ENCODE measurements at regions of chr15 and their contacts with region 1.

Region 1: DNA sequence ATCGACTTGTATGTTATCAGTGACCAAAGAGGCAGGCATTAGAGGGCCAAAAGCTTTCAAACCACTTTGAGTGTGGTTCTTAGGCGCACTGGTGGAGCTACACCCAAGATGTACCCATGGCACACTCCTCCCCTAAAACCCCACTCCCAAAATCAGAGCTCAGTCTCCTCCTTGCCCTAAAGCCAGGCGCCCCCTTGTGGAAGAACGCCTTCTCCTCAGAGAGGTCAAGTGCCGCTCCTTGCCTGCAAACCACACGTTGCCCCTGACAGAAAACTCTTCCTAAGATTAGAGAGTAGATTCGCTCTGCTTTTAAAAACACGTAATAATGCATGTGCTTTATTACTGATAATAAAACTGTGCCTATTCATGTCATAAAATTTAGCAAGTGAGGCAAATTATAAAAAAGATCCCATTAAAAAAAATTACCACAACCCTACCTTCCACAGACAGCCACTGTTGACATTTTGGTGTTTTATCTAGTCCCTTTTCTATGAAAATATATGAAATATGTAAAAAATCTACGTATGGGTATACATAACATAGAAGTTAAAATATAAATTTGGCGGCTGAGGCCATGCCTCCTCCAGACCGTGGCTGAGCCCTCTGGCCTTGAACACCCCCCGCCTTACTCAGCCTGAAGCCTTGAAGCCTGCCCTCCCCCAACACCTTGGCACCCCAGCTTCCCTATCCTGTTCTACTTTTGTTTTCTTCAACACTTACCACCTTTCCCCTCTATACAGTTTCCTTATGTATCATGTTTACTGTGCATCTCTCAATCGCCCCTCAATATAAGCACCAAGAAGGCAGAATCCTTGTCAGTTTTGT is 33.5 kb downstream of the BCL2L10 start:
- DNase-seq: peak; percentile 72 to 80 (median 73)
- H3K4me3 ChIP-seq: no peak overlapping the region
- H3K4me3 Mint-ChIP-seq: peak overlapping the region in 1 of 8 donors; percentile 0
- H3K27ac ChIP-seq: no peak overlapping the region
- H3K27ac Mint-ChIP-seq: peak overlapping the region in 1 of 7 donors; percentile 31
- H3K4me1 ChIP-seq: no peaks in the 10 kb centered on the region
- H3K4me1 Mint-ChIP-seq: peaks cover 2 to 15% (median 6%) of the 10 kb centered on the region in 4 donors
- H3K27me3 ChIP-seq: no peaks in the 10 kb centered on the region
- H3K27me3 Mint-ChIP-seq: no peaks in the 10 kb centered on the region

Region 2: DNA sequence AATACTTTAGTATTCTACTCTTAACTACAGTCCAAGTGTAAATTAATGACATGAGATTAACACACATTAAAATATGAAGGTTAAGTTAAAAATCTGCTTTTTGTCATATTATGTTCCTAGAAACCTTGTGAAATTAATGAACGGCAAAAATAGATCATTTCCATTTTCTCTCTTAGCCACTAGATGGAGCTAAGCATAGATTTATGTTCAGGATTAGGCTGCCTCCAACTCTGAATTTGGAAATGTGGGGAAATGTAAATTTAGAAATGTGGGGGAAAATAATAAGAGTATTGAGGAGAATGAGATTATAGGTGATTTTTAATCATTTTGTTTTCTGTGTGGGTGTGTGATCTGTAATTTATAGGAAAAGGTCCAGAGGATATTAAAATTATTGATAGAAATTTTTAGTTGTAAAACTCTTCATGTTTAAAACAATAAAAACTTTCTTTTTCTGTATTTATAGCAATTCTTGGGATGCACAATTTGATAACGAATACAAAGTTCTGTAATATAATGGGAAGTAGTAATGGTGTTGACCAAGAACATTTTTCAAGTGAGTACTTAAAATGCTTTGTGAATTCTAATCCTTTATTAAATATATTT is 190.4 kb before region 1 on chr15:
- CTCF ChIA-PET with region 1: interaction called, 4 read pairs
- POLR2A ChIA-PET with region 1: no interaction called
- intact Hi-C with region 1: loop called (anchors 1 kb)
- DNase-seq: peak in 3 of 5 donors; percentile 8 to 20 (median 19)
- H3K4me3 ChIP-seq: no peak overlapping the region
- H3K4me3 Mint-ChIP-seq: no peak overlapping the region
- H3K27ac ChIP-seq: no peak overlapping the region
- H3K27ac Mint-ChIP-seq: peak overlapping the region in 2 of 7 donors; percentile 0 to 13
- H3K4me1 ChIP-seq: no peaks in the 10 kb centered on the region
- H3K4me1 Mint-ChIP-seq: peaks cover 6 to 16% (median 7%) of the 10 kb centered on the region in 4 donors
- H3K27me3 ChIP-seq: no peaks in the 10 kb centered on the region
- H3K27me3 Mint-ChIP-seq: no peaks in the 10 kb centered on the region

Region 3: GRCh38 chr15:51982013-51982769 is 96.9 kb before region 1 on chr15:
- CTCF ChIA-PET with region 1: interaction called, 101 read pairs
- POLR2A ChIA-PET with region 1: no interaction called
- intact Hi-C with region 1: loop called (anchors 1 kb)
- DNase-seq: peak; percentile 61 to 72 (median 66)
- H3K4me3 ChIP-seq: no peak overlapping the region
- H3K4me3 Mint-ChIP-seq: peak overlapping the region; percentile 69 to 87 (median 80)
- H3K27ac ChIP-seq: no peak overlapping the region
- H3K27ac Mint-ChIP-seq: peak overlapping the region; percentile 15 to 94 (median 83)
- H3K4me1 ChIP-seq: peaks cover 13% of the 10 kb centered on the region
- H3K4me1 Mint-ChIP-seq: peaks cover 9 to 10% (median 10%) of the 10 kb centered on the region in 4 donors
- H3K27me3 ChIP-seq: no peaks in the 10 kb centered on the region
- H3K27me3 Mint-ChIP-seq: no peaks in the 10 kb centered on the region

Region 4: DNA sequence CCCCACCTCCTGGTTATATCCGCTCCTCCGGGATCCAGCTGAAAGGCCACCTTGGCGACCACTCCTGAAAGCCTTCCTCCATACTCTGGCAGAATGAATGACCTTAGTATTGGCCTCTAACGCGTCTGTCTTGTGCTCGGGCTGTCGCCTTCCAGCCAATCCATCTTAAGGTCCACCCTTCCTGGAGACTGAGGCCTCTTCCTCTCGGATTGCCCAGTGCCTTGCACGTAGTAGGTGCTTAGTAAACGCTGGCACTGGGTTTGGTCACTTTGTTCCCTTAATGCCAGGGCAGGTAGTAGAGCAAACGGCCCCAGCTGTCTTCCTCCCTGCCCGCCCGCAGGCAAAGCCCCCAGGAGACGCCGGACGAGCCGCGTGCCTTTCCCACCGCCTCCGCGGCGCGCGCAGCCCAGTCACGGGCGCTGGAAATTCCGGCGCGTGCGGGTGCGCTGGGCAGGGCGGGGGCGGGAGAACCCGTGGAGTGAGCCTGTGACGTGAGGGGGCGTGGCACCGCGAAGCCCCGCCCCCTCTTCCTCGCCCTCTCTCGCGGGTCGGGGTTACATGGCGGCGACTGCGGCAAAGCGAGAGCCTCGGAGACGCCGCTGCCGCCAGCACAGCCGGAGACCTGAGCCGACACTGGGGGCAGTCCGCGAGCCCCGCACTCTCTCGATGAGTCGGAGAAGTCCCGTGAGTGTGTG is 60.2 kb before region 1 on chr15 and contains the start of gene MAPK6:
- CTCF ChIA-PET with region 1: interaction called, 9 read pairs
- POLR2A ChIA-PET with region 1: interaction called, 11 read pairs
- intact Hi-C with region 1: loop called (anchors 2 kb)
- DNase-seq: peak; percentile 91 to 94 (median 94)
- H3K4me3 ChIP-seq: peak within 1 kb of the TSS; percentile 59 to 78
- H3K4me3 Mint-ChIP-seq: peak within 1 kb of the TSS; percentile 94 to 99 (median 97)
- H3K27ac ChIP-seq: peak within 1 kb of the TSS; percentile 89
- H3K27ac Mint-ChIP-seq: peak within 1 kb of the TSS; percentile 98 to 99 (median 98)
- H3K4me1 ChIP-seq: peaks cover 41% of the 10 kb centered on the region
- H3K4me1 Mint-ChIP-seq: peaks cover 25 to 54% (median 38%) of the 10 kb centered on the region in 4 donors
- H3K27me3 ChIP-seq: no peaks in the 10 kb centered on the region
- H3K27me3 Mint-ChIP-seq: no peaks in the 10 kb centered on the region
- total RNA-seq, gene MAPK6: 18.2 to 24.0 TPM

Region 5: GRCh38 chr15:52050416-52050815 is 28.7 kb before region 1 on chr15:
- CTCF ChIA-PET with region 1: interaction called, 48 read pairs
- POLR2A ChIA-PET with region 1: interaction called, 6 read pairs
- intact Hi-C with region 1: loop called (anchors 2 kb)
- DNase-seq: no peak
- H3K4me3 ChIP-seq: no peak overlapping the region
- H3K4me3 Mint-ChIP-seq: no peak overlapping the region
- H3K27ac ChIP-seq: no peak overlapping the region
- H3K27ac Mint-ChIP-seq: peak overlapping the region in 2 of 7 donors; percentile 43 to 82
- H3K4me1 ChIP-seq: peaks cover 14% of the 10 kb centered on the region
- H3K4me1 Mint-ChIP-seq: peaks cover 17 to 21% (median 19%) of the 10 kb centered on the region in 4 donors
- H3K27me3 ChIP-seq: no peaks in the 10 kb centered on the region
- H3K27me3 Mint-ChIP-seq: no peaks in the 10 kb centered on the region

Region 6: GRCh38 chr15:52208306-52208946 is 129.3 kb after region 1 on chr15:
- CTCF ChIA-PET with region 1: interaction called, 9 read pairs
- POLR2A ChIA-PET with region 1: no interaction called
- intact Hi-C with region 1: loop called (anchors 5 kb)
- DNase-seq: peak; percentile 69 to 78 (median 72)
- H3K4me3 ChIP-seq: no peak overlapping the region
- H3K4me3 Mint-ChIP-seq: no peak overlapping the region
- H3K27ac ChIP-seq: no peak overlapping the region
- H3K27ac Mint-ChIP-seq: peak overlapping the region in 4 of 7 donors; percentile 43 to 84 (median 66)
- H3K4me1 ChIP-seq: no peaks in the 10 kb centered on the region
- H3K4me1 Mint-ChIP-seq: peaks cover 0 to 4% (median 1%) of the 10 kb centered on the region in 4 donors
- H3K27me3 ChIP-seq: no peaks in the 10 kb centered on the region
- H3K27me3 Mint-ChIP-seq: no peaks in the 10 kb centered on the region